ENCODE measurements at regions of chr20 and their contacts with region 1.

Region 1: DNA sequence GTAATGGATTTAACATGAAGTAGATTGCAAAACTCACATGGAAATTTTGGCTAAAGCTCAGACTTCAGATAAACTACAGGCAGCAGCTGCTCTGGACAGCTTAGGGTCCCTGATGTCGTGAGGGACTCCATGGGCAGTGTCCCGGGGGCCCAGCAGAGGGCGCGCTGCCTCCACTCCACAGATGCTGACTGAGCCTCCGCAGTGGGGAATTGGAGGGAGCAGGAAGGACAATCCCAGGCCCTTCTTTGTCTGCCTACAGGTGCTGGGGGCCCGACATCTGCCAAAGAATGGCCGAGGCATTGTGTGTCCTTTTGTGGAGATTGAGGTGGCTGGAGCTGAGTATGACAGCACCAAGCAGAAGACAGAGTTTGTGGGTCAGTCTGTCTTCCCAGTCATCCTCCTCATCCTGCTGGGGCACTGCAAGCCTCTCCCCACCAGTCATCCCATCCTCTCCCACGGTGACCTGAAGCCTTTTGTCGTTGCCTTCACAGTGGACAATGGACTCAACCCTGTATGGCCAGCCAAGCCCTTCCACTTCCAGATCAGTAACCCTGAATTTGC is 35.9 kb downstream of the PLCG1 start:
- DNase-seq: peak; percentile 95
- H3K4me3 ChIP-seq: no peak overlapping the region
- H3K27ac ChIP-seq: peak overlapping the region; percentile 74 to 83 (median 80)
- H3K4me1 ChIP-seq: peaks cover 0 to 68% (median 64%) of the 10 kb centered on the region in 4 donors
- H3K27me3 ChIP-seq: no peaks in the 10 kb centered on the region
- CTCF ChIP-seq: peak; percentile 94 to 98 (median 96)
- EP300 ChIP-seq: no peak
- POLR2A ChIP-seq: no peak

Region 2: DNA sequence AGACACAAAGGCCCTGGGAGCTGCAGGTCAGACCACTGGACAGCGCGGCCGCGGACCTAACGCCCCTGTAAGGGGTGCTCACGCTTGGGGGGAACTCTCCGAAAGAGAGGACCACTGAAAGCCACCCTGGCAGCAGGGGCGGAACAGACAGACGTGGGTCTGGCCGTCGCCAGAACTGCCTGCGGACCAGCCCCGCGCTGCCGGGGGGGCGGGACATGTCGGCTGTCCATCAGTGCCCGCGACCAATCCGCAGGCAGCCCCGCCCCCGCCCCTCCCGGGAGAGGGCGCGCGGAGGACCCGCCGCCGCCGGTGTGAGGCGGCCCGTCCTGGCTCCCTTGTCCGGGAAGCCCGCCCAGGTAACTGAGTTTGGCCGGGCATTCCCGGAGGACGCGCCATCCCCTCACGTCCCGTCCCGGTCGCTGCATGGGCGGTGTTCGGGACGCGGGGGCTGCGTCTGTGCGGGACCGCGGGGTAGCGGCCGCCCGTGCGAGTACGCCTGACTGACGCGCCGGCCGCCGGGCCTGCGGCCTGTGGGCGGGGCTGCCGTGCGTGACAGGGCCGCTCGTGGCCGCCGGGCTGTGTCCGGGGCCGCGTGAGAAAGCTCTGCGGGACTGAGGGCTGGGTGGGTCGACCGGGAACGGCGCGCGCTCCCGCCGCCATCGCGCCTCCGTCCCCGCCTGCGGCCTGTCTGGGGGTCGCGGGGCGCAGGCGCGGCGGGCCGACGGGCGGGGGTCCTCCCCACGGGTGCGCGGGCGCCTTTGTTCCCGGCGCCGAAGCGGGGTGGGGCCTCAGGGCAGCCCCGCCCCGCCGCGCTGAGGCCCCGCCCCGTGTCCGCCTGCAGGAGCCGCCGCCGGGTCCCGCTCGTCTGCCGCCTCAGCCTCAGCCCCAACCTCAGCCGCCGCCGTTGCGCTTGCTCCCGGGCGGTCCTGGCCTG is 36.3 kb before region 1 on chr20 and contains the start of gene PLCG1:
- intact Hi-C with region 1: loop called (anchors 5 kb)
- DNase-seq: peak; percentile 95
- H3K4me3 ChIP-seq: peak within 1 kb of the TSS; percentile 57 to 83 (median 73)
- H3K27ac ChIP-seq: peak within 1 kb of the TSS; percentile 94 to 96 (median 96)
- H3K4me1 ChIP-seq: peaks cover 0 to 47% (median 38%) of the 10 kb centered on the region in 4 donors
- H3K27me3 ChIP-seq: no peaks in the 10 kb centered on the region
- CTCF ChIP-seq: no peak
- EP300 ChIP-seq: no peak
- POLR2A ChIP-seq: peak; percentile 29 to 66
- total RNA-seq, gene PLCG1: 48.5 to 152 (median 67.0) TPM

Region 3: GRCh38 chr20:41232973-41233926 is 60.0 kb after region 1 on chr20:
- intact Hi-C with region 1: loop called (anchors 2 kb)
- DNase-seq: no peak
- H3K4me3 ChIP-seq: no peak overlapping the region
- H3K27ac ChIP-seq: peak overlapping the region; percentile 59 to 75 (median 62)
- H3K4me1 ChIP-seq: peaks cover 0 to 46% (median 40%) of the 10 kb centered on the region in 4 donors
- H3K27me3 ChIP-seq: no peaks in the 10 kb centered on the region
- CTCF ChIP-seq: no peak
- EP300 ChIP-seq: no peak
- POLR2A ChIP-seq: no peak

Region 4: GRCh38 chr20:41339507-41340326 is 166.5 kb after region 1 on chr20:
- intact Hi-C with region 1: loop called (anchors 1 kb)
- DNase-seq: peak; percentile 90
- H3K4me3 ChIP-seq: peak overlapping the region; percentile 9 to 43 (median 36)
- H3K27ac ChIP-seq: peak overlapping the region; percentile 68 to 80 (median 74)
- H3K4me1 ChIP-seq: peaks cover 0 to 31% (median 20%) of the 10 kb centered on the region in 4 donors
- H3K27me3 ChIP-seq: no peaks in the 10 kb centered on the region
- CTCF ChIP-seq: peak; percentile 99 to 100 (median 99)
- EP300 ChIP-seq: no peak
- POLR2A ChIP-seq: no peak

Region 5: DNA sequence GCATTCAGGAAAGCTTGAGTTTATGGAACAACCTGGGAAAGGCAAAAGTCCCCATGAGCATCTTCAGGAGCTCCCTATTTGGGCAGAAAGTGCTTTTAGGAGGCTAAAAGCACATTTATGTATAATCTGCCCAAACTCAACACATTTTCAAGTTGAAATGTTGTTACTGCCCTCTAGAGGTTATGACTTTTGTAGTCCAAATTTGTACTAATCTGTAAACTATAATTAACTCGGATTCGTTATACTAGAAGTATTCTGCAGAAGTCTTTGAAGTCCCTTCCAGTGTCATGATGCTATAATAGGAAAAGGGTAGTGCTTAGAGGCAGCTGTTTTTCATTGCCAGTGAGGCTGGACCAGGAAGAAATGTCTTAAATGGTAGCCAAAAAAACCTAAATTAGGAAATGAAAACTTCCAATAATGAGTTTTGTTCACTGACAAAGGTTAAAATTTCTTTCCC is 238.2 kb after region 1 on chr20:
- intact Hi-C with region 1: loop called (anchors 10 kb)
- DNase-seq: no peak
- H3K4me3 ChIP-seq: no peak overlapping the region
- H3K27ac ChIP-seq: peak overlapping the region in 3 of 4 donors; percentile 11 to 46 (median 30)
- H3K4me1 ChIP-seq: peaks cover 0 to 7% (median 0%) of the 10 kb centered on the region in 4 donors
- H3K27me3 ChIP-seq: no peaks in the 10 kb centered on the region
- CTCF ChIP-seq: peak in 1 of 4 experiments; percentile 25
- EP300 ChIP-seq: no peak
- POLR2A ChIP-seq: no peak

Region 6: DNA sequence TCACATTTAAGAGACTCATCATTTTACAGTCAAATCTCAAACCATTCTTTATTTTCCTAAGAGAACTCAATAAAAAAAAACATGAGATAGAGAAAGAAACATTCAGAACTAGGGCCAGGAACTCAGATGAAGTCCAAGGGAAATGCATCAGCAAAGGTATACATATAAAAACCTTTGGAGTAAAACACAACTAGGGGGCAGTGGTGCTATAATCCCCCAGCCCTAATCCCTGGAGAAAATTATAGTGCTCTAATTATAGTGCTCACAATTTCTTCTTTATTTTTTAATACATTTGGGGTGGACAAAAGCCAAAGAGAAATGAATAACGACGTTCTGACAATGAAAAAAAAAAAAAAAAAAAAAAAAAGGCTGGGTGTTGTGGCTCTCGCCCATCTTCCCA is 294.0 kb after region 1 on chr20:
- intact Hi-C with region 1: no loop called
- DNase-seq: no peak
- H3K4me3 ChIP-seq: no peak overlapping the region
- H3K27ac ChIP-seq: no peak overlapping the region
- H3K4me1 ChIP-seq: no peaks in the 10 kb centered on the region
- H3K27me3 ChIP-seq: no peaks in the 10 kb centered on the region
- CTCF ChIP-seq: no peak
- EP300 ChIP-seq: no peak
- POLR2A ChIP-seq: no peak

Measured in sigmoid colon (tissue), 7 donors.